Posterior cingulate gyrus (tissue), 11 donors: ENCODE measurements at regions of chr1 and their contacts with region 1.

Region 1: GRCh38 chr1:102434421-102434820 is 437.7 kb upstream of the OLFM3 start:
- DNase-seq: no peak

Region 2: GRCh38 chr1:101820071-101820470 is 614.4 kb before region 1 on chr1:
- intact Hi-C with region 1: loop called (anchors 5 kb)
- DNase-seq: no peak